ENCODE measurements at regions of chr21 and their contacts with region 1.

Region 1: GRCh38 chr21:14737922-14738321 is 191.8 kb upstream of the SAMSN1 start:
- DNase-seq: peak; percentile 25
- H3K4me3 Mint-ChIP-seq: no peak overlapping the region
- H3K27ac Mint-ChIP-seq: no peak overlapping the region
- H3K4me1 Mint-ChIP-seq: peaks cover 41% of the 10 kb centered on the region
- H3K27me3 Mint-ChIP-seq: no peaks in the 10 kb centered on the region

Region 2: GRCh38 chr21:14454016-14455009 is 283.6 kb before region 1 on chr21:
- intact Hi-C with region 1: loop called (anchors 1 kb)
- DNase-seq: no peak
- H3K4me3 Mint-ChIP-seq: no peak overlapping the region
- H3K27ac Mint-ChIP-seq: peak overlapping the region; percentile 67
- H3K4me1 Mint-ChIP-seq: peaks cover 52% of the 10 kb centered on the region
- H3K27me3 Mint-ChIP-seq: no peaks in the 10 kb centered on the region

Region 3: GRCh38 chr21:14487490-14488432 is 250.2 kb before region 1 on chr21:
- intact Hi-C with region 1: loop called (anchors 2 kb)
- DNase-seq: no peak
- H3K4me3 Mint-ChIP-seq: peak overlapping the region; percentile 2
- H3K27ac Mint-ChIP-seq: peak overlapping the region; percentile 88
- H3K4me1 Mint-ChIP-seq: peaks cover 69% of the 10 kb centered on the region
- H3K27me3 Mint-ChIP-seq: no peaks in the 10 kb centered on the region

Region 4: GRCh38 chr21:14523234-14523633 is 214.7 kb before region 1 on chr21:
- intact Hi-C with region 1: loop called (anchors 2 kb)
- DNase-seq: no peak
- H3K4me3 Mint-ChIP-seq: peak overlapping the region; percentile 71
- H3K27ac Mint-ChIP-seq: peak overlapping the region; percentile 91
- H3K4me1 Mint-ChIP-seq: peaks cover 52% of the 10 kb centered on the region
- H3K27me3 Mint-ChIP-seq: no peaks in the 10 kb centered on the region

Region 5: GRCh38 chr21:14591882-14592281 is 146.0 kb before region 1 on chr21:
- intact Hi-C with region 1: loop called (anchors 2 kb)
- DNase-seq: no peak
- H3K4me3 Mint-ChIP-seq: no peak overlapping the region
- H3K27ac Mint-ChIP-seq: peak overlapping the region; percentile 86
- H3K4me1 Mint-ChIP-seq: peaks cover 38% of the 10 kb centered on the region
- H3K27me3 Mint-ChIP-seq: no peaks in the 10 kb centered on the region

Region 6: DNA sequence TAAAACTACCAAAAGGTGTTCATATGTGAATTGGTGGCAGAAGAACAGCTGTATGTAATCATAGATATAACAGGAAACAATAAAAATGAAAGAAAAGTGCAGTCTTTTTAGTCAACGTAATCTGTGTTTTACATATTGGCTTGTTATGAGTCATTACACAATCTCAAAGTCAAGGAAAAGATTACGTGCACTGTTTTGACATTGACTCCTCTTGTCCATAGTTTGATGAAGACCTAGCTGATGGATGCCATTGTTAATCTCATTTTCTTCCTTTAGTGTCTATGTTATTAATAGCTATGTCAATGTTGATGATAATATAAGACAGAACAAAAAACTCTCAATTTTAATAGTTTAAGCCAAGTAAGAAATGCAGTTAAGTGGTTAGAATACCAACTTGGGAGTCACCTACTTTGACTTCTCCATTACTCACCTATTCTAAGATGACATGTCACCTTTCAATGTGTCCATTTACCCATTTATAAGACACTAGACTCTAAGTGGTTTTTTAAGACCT is 107.3 kb before region 1 on chr21:
- intact Hi-C with region 1: loop called (anchors 5 kb)
- DNase-seq: no peak
- H3K4me3 Mint-ChIP-seq: no peak overlapping the region
- H3K27ac Mint-ChIP-seq: peak overlapping the region; percentile 62
- H3K4me1 Mint-ChIP-seq: peaks cover 24% of the 10 kb centered on the region
- H3K27me3 Mint-ChIP-seq: no peaks in the 10 kb centered on the region

Region 7: GRCh38 chr21:14675774-14676530 is 62.0 kb before region 1 on chr21:
- intact Hi-C with region 1: loop called (anchors 5 kb)
- DNase-seq: no peak
- H3K4me3 Mint-ChIP-seq: peak overlapping the region; percentile 52
- H3K27ac Mint-ChIP-seq: peak overlapping the region; percentile 97
- H3K4me1 Mint-ChIP-seq: peaks cover 47% of the 10 kb centered on the region
- H3K27me3 Mint-ChIP-seq: no peaks in the 10 kb centered on the region

Region 8: DNA sequence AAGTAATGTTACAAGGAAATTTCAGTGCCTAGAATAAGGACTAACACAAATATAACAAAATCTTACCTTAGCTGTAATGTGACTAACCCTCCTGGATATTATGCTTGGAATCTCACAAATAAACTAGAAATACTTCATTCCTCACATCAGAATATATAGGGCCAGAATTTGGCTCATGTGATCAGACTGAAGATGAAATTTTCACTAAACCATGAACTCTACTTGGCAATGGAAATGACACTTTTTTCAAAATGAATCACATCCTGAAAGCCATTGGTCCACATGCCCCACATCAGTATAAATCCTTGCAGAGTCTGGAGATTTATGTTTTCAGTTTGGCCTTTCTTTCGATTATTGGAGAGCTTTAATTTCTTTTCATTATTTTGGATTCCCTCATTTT is 99.0 kb after region 1 on chr21:
- intact Hi-C with region 1: no loop called
- DNase-seq: no peak
- H3K4me3 Mint-ChIP-seq: no peak overlapping the region
- H3K27ac Mint-ChIP-seq: no peak overlapping the region
- H3K4me1 Mint-ChIP-seq: peaks cover 6% of the 10 kb centered on the region
- H3K27me3 Mint-ChIP-seq: peaks cover 5% of the 10 kb centered on the region

Measured in activated T-helper 2 cell treated with anti-CD3 and anti-CD28 coated beads, Interferon-gamma antibody, Interleukin-2, Interleukin-4, amounts not matched to agents 10 μg/mL and 5 μg/mL and 100 μg/mL, durations not matched to agents 14 hours and 24 hours and 36 hours (primary cell).